ENCODE measurements at regions of chr1 and their contacts with region 1.

Region 1: GRCh38 chr1:228515200-228515834 is 28.1 kb downstream of the RNF187 start:
- DNase-seq: peak in 4 of 5 donors; percentile 44 to 48 (median 45)
- H3K4me3 ChIP-seq: no peak overlapping the region
- H3K4me3 Mint-ChIP-seq: no peak overlapping the region
- H3K27ac ChIP-seq: no peak overlapping the region
- H3K27ac Mint-ChIP-seq: peak overlapping the region in 1 of 7 donors; percentile 29
- H3K4me1 ChIP-seq: peaks cover 14% of the 10 kb centered on the region
- H3K4me1 Mint-ChIP-seq: peaks cover 7 to 21% (median 13%) of the 10 kb centered on the region in 4 donors
- H3K27me3 ChIP-seq: no peaks in the 10 kb centered on the region
- H3K27me3 Mint-ChIP-seq: peaks cover 18 to 20% of the 10 kb centered on the region in 2 donors

Region 2: GRCh38 chr1:227999056-227999930 is 516.0 kb before region 1 on chr1:
- CTCF ChIA-PET with region 1: no interaction called
- POLR2A ChIA-PET with region 1: no interaction called
- intact Hi-C with region 1: loop called (anchors 1 kb)
- DNase-seq: peak; percentile 61 to 73 (median 66)
- H3K4me3 ChIP-seq: no peak overlapping the region
- H3K4me3 Mint-ChIP-seq: no peak overlapping the region
- H3K27ac ChIP-seq: no peak overlapping the region
- H3K27ac Mint-ChIP-seq: no peak overlapping the region
- H3K4me1 ChIP-seq: no peaks in the 10 kb centered on the region
- H3K4me1 Mint-ChIP-seq: peaks cover 0 to 3% (median 0%) of the 10 kb centered on the region in 4 donors
- H3K27me3 ChIP-seq: peaks cover 8% of the 10 kb centered on the region
- H3K27me3 Mint-ChIP-seq: peaks cover 16 to 26% of the 10 kb centered on the region in 2 donors

Region 3: DNA sequence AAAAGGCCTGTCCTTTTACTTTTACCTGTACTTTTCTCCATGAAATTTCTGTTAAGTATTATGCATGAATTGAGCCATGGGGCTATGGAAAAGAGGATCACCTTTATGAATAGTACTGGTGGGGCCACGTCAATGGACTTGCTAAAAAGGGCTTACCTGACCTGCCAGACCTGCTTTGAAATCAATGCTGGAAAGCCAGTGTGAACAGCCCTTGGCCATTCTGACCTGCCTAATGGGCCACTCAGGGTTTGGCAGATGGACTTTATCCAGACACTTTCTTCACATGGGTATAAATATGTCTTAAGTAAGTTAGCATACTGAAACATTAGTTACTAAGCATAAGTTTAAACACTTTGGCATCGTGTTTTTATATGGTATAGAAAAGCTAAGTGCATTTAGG is 383.6 kb before region 1 on chr1:
- CTCF ChIA-PET with region 1: interaction called, 13 read pairs
- POLR2A ChIA-PET with region 1: no interaction called
- intact Hi-C with region 1: no loop called
- DNase-seq: no peak
- H3K4me3 ChIP-seq: no peak overlapping the region
- H3K4me3 Mint-ChIP-seq: no peak overlapping the region
- H3K27ac ChIP-seq: no peak overlapping the region
- H3K27ac Mint-ChIP-seq: no peak overlapping the region
- H3K4me1 ChIP-seq: peaks cover 5% of the 10 kb centered on the region
- H3K4me1 Mint-ChIP-seq: peaks cover 2 to 5% (median 4%) of the 10 kb centered on the region in 4 donors
- H3K27me3 ChIP-seq: no peaks in the 10 kb centered on the region
- H3K27me3 Mint-ChIP-seq: peaks cover 8 to 14% of the 10 kb centered on the region in 2 donors

Region 4: DNA sequence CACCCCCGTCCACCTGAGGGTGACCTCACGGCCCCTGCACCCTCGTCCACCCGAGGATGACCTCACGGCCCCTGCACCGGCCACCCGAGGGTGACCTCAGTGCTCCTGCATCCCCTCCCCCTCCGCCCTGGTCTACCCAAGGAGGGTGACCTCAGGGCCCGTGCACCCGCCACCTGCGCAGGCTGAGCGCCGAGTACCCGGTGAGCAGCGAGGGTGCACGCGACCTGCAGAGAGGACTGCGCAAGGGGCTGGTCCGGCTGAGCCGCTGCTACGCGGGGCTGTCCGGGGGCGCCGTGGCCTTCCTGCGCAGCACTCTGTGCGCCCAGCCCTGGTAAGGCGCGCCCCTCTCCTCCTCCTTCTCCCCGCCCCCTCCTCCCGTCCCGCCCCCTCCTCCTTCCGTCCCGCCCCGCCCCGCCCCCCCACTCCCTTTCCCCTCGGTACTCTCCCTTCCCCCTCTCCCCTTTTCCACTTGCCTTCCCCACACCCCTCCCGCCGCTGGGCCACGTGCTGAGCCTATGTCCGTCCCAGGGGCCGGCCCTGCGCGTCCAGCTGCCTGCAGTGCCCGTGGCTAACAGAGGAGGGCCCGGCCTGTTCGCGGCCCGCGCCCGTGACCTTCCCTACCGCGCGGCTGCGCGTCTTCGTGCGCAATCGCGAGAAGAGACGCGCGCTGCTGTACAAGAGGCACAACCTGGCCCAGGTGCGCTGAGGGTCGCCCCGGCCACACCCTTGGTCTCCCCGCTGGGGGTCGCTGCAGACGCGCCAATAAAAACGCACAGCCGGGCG is 137.0 kb before region 1 on chr1:
- CTCF ChIA-PET with region 1: no interaction called
- POLR2A ChIA-PET with region 1: no interaction called
- intact Hi-C with region 1: loop called (anchors 2 kb)
- DNase-seq: peak; percentile 46 to 63 (median 52)
- H3K4me3 ChIP-seq: peak overlapping the region in 1 of 2 donors; percentile 52
- H3K4me3 Mint-ChIP-seq: peak overlapping the region; percentile 78 to 87 (median 84)
- H3K27ac ChIP-seq: no peak overlapping the region
- H3K27ac Mint-ChIP-seq: no peak overlapping the region
- H3K4me1 ChIP-seq: peaks cover 10% of the 10 kb centered on the region
- H3K4me1 Mint-ChIP-seq: peaks cover 2 to 11% (median 5%) of the 10 kb centered on the region in 4 donors
- H3K27me3 ChIP-seq: no peaks in the 10 kb centered on the region
- H3K27me3 Mint-ChIP-seq: peaks cover 2 to 7% of the 10 kb centered on the region in 2 donors

Region 5: DNA sequence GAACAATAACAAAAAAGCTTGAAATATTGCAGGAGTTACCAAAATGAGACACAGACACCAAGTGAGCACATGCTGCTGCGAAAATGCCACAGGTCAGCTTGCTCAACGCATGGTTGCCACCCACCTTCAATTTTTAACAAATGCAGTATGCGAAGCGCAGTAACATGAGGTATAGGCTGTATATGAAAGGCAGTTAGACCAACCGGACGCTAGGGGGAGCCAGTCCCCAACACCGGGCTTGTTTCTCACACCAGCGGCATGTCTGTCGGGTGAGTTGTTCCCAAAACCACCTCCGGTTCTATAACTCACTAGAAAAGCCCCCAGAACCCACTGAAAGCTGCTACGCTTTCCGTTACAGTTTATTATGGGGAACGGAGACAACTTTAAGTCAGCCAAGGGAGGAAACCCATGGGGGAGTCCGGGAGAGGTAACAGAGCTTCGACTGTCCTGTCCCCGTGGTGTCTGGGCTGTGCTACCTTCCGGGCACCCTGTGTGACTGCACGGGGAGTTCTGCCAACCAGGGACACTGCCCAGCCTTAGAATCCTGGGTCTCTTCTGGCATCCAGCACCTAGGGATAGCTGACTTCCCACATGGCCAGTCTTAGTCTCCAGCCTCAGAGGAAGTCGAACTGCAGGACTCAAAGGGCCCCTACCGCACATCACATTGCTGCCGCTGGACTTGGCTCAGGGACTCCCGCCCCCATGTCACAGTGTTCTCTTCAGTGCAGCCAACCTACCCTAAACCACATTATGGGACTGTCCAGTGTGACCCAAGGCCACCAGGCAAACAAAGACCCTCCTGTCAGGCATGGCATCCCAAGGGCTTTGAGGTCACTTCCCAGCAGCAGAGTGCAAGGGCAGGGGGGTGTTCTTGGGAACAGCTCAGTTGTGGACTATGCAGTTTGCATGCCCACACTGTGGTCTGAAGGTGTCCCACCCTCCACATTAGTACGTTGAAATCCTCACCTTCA is 14.1 kb before region 1 on chr1:
- CTCF ChIA-PET with region 1: interaction called, 14 read pairs
- POLR2A ChIA-PET with region 1: interaction called, 3 read pairs
- intact Hi-C with region 1: no loop called
- DNase-seq: peak; percentile 83 to 87 (median 83)
- H3K4me3 ChIP-seq: peak overlapping the region in 1 of 2 donors; percentile 44
- H3K4me3 Mint-ChIP-seq: peak overlapping the region; percentile 62 to 89 (median 80)
- H3K27ac ChIP-seq: no peak overlapping the region
- H3K27ac Mint-ChIP-seq: peak overlapping the region in 5 of 7 donors; percentile 6 to 83 (median 72)
- H3K4me1 ChIP-seq: peaks cover 15% of the 10 kb centered on the region
- H3K4me1 Mint-ChIP-seq: peaks cover 13 to 29% (median 20%) of the 10 kb centered on the region in 4 donors
- H3K27me3 ChIP-seq: no peaks in the 10 kb centered on the region
- H3K27me3 Mint-ChIP-seq: peaks cover 0 to 2% of the 10 kb centered on the region in 2 donors

Measured in CD4-positive, alpha-beta memory T cell (primary cell).